ENCODE measurements at regions of chr22 and their contacts with region 1.

Region 1: GRCh38 chr22:38569972-38570778 is at the start of gene DMC1:
- DNase-seq: peak; percentile 94 to 97
- ATAC-seq: peak; percentile 96 to 98 (median 96)
- H3K4me3 ChIP-seq: peak within 1 kb of the TSS; percentile 43 to 78 (median 66)
- H3K27ac ChIP-seq: peak within 1 kb of the TSS; percentile 68 to 90 (median 80)
- H3K4me1 ChIP-seq: peaks cover 2 to 35% (median 19%) of the 10 kb centered on the region in 9 donors
- H3K27me3 ChIP-seq: peaks cover 0 to 45% (median 0%) of the 10 kb centered on the region in 7 donors
- CTCF ChIP-seq: peak in 1 of 9 donors; percentile 11
- total RNA-seq, gene DMC1: 0.40 to 3.2 (median 1.4) TPM

Region 2: GRCh38 chr22:38051900-38052862 is 518.0 kb before region 1 on chr22:
- intact Hi-C with region 1: loop called in 9 of 10 experiments (anchors 2 to 10 kb)
- DNase-seq: peak; percentile 71 to 78
- ATAC-seq: peak; percentile 67 to 82 (median 75)
- H3K4me3 ChIP-seq: peak overlapping the region in 1 of 10 donors; percentile 9
- H3K27ac ChIP-seq: no peak overlapping the region
- H3K4me1 ChIP-seq: peaks cover 0 to 15% (median 11%) of the 10 kb centered on the region in 9 donors
- H3K27me3 ChIP-seq: peaks cover 0 to 6% (median 0%) of the 10 kb centered on the region in 7 donors
- CTCF ChIP-seq: peak; percentile 75 to 95 (median 91)

Region 3: GRCh38 chr22:38069372-38070249 is 500.6 kb before region 1 on chr22:
- intact Hi-C with region 1: loop called in 1 of 10 experiments (anchors 10 kb)
- DNase-seq: peak; percentile 81 to 85
- ATAC-seq: peak; percentile 82 to 92 (median 89)
- H3K4me3 ChIP-seq: peak overlapping the region in 6 of 10 donors; percentile 17 to 29 (median 22)
- H3K27ac ChIP-seq: peak overlapping the region; percentile 72 to 93 (median 86)
- H3K4me1 ChIP-seq: peaks cover 14 to 47% (median 37%) of the 10 kb centered on the region in 9 donors
- H3K27me3 ChIP-seq: no peaks in the 10 kb centered on the region
- CTCF ChIP-seq: peak; percentile 34 to 76 (median 61)

Region 4: GRCh38 chr22:38398609-38399461 is 171.3 kb before region 1 on chr22:
- intact Hi-C with region 1: loop called in 2 of 10 experiments (anchors 5 kb)
- DNase-seq: peak; percentile 86 to 91
- ATAC-seq: peak; percentile 89 to 94 (median 91)
- H3K4me3 ChIP-seq: peak overlapping the region; percentile 81 to 100 (median 94)
- H3K27ac ChIP-seq: peak overlapping the region; percentile 88 to 100 (median 98)
- H3K4me1 ChIP-seq: peaks cover 2 to 45% (median 32%) of the 10 kb centered on the region in 9 donors
- H3K27me3 ChIP-seq: no peaks in the 10 kb centered on the region
- CTCF ChIP-seq: peak in 2 of 9 donors; percentile 15 to 19

Region 5: DNA sequence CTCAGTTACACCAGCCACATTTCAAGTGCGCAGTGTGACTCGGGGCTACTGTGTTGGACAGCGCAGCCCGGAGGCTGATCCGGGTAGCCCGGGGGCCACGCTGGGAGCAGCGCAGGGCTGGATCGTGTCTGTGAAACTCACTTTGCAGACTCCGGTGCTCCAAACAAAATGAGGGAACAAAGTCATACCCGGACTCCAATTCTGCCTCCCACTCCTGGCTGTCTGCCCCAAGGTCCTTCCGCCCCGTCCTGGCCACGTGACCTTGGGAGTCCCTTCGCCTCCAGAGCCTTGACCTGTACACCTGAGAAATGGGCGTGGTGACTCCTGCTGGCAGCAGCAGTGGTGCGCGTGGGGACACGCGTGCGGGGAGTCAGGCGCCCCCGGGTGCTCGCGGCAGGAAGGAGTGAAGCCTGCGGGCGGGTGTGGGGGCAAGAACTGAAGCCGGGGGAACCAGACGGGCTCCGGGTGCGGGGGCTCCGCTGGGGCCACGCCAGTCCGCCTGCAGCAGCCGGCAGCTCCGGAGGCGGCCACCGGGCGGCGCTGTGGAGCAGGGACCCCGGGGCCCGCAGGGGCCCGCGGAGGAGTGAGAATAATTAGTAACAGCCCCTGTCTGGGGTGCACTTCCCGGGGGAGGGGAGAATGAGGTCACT is 157.6 kb before region 1 on chr22:
- intact Hi-C with region 1: loop called in 7 of 10 experiments (anchors 2 to 10 kb)
- DNase-seq: peak in 1 of 2 donors; percentile 45
- ATAC-seq: peak in 6 of 8 donors; percentile 31 to 54 (median 42)
- H3K4me3 ChIP-seq: peak overlapping the region in 9 of 10 donors; percentile 15 to 44 (median 37)
- H3K27ac ChIP-seq: peak overlapping the region in 8 of 10 donors; percentile 8 to 81 (median 68)
- H3K4me1 ChIP-seq: peaks cover 7 to 32% (median 15%) of the 10 kb centered on the region in 9 donors
- H3K27me3 ChIP-seq: peaks cover 0 to 6% (median 0%) of the 10 kb centered on the region in 7 donors
- CTCF ChIP-seq: peak; percentile 75 to 88 (median 85)

Measured in heart right ventricle (tissue), 16 donors.